AG04449 (cell line): ENCODE measurements at regions of chr5 and their contacts with region 1.

Region 1: DNA sequence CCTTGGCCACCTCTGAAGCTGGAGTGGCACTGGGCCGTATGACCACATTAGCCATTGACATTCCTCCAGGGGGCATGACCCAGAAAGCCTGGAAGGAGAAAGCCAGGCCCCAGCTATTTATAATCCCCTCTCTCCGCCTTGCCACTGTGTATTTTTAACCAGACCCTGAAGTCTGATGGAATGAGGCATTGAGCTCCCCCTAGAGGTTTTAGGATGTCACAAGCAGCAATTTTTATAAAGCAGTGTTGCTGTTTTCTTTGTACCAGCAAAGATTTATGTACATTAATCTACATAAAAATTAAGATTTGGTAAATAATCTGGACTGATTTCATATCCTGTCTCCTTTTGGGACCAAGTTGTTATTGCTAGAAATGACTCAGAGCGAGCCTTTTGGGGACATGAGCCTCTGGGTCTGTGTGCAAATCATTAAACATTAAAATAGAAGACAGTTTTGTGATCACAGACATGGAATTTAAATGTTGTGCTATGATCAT is 127.1 kb downstream of the TRIO start:
- DNase-seq: no peak
- H3K4me3 ChIP-seq: no peak overlapping the region
- CTCF ChIP-seq: peak; percentile 62

Region 2: GRCh38 chr5:13771011-13771571 is 499.2 kb before region 1 on chr5:
- CTCF ChIA-PET with region 1: no interaction called
- POLR2A ChIA-PET with region 1: no interaction called
- DNase-seq: no peak
- H3K4me3 ChIP-seq: no peak overlapping the region
- CTCF ChIP-seq: no peak

Region 3: GRCh38 chr5:13987843-13988464 is 282.3 kb before region 1 on chr5:
- CTCF ChIA-PET with region 1: interaction called, 26 read pairs
- POLR2A ChIA-PET with region 1: no interaction called
- DNase-seq: peak; percentile 21
- H3K4me3 ChIP-seq: no peak overlapping the region
- CTCF ChIP-seq: peak; percentile 74

Region 4: GRCh38 chr5:14108170-14108996 is 161.9 kb before region 1 on chr5:
- CTCF ChIA-PET with region 1: interaction called, 24 read pairs
- POLR2A ChIA-PET with region 1: no interaction called
- DNase-seq: no peak
- H3K4me3 ChIP-seq: no peak overlapping the region
- CTCF ChIP-seq: peak; percentile 45

Region 5: DNA sequence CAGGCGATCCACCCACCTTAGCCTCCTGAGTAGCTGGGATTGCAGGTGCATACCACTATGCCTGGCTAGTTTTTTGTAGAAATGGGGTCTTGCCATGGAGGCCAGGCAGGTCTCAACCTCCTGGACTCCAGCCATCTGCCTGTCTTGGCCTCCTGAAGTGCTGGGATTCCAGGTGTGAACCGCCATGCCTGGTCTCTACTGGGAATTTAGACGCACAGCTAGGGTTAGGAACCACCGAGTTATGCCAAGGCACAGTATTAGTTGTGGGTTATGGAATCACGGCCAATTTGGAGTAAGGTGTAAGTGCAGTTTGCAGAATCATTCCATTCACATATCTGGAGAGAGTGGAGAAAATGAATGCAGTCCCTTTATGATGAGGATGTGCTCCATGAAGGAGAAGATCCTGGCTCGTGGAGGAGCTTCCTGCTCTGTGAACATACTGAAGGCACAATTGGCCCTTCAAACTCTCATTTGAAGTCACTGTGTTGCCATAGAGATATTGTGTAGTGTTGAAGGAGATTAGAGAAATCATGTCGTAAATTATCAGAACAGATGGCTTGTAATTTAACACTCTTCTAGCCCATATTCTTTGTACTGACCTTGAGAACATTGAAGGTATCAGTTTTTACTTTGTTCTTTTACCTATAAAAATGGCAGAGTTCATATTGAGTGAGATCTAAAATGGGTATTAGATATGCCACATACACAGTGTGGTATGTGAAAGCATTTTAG is 108.3 kb before region 1 on chr5:
- CTCF ChIA-PET with region 1: interaction called, 51 read pairs
- POLR2A ChIA-PET with region 1: interaction called, 3 read pairs
- DNase-seq: no peak
- H3K4me3 ChIP-seq: no peak overlapping the region
- CTCF ChIP-seq: no peak

Region 6: GRCh38 chr5:14250084-14250695 is 20.1 kb before region 1 on chr5:
- CTCF ChIA-PET with region 1: interaction called, 13 read pairs
- POLR2A ChIA-PET with region 1: interaction called, 3 read pairs
- DNase-seq: no peak
- H3K4me3 ChIP-seq: no peak overlapping the region
- CTCF ChIP-seq: no peak

Region 7: GRCh38 chr5:14286574-14287421 is 16.5 kb after region 1 on chr5:
- CTCF ChIA-PET with region 1: interaction called, 70 read pairs
- POLR2A ChIA-PET with region 1: interaction called, 3 read pairs
- DNase-seq: no peak
- H3K4me3 ChIP-seq: no peak overlapping the region
- CTCF ChIP-seq: no peak

Region 8: DNA sequence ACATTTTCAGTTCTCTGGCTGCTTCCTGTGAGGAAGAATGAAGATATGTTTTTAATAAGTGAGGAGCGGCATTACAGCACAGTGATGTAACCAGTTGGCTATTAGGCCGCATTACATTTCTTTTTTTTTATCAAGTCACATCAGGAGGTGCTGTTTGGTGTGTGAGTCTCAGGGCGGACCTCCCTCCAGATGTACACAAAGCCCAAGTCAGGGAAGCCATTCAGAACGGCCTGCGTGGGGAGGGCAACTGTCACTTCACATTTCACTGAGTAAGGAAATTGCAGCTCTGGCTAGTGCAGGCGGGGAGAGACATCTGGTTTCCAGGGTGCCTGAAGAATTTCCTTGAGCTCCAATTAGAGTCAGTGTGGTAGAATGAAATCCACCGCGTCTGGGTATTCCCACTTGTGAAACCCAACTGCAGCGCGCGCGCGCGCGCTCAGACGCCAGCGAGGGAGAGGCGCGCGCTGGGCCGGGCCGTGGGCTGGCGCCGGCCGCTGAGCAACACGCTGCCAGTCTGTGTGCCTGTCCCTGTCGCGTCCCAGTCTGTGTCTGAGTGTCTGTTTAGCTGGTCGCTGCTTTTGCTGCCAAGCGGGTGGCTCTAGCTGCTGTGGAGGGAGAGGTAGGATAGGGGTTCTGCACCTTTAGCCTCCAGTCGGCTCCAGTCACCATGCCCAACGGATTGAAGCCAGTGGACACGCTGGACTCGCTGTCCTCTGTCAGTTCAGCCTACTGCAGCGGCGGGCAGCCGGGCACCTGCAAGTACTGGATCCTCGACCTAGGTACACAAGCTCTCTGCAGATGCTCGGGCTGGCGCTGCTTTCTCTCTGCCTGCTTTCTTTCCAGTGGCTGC is 170.6 kb after region 1 on chr5:
- CTCF ChIA-PET with region 1: no interaction called
- POLR2A ChIA-PET with region 1: no interaction called
- DNase-seq: peak; percentile 82
- H3K4me3 ChIP-seq: peak overlapping the region; percentile 68
- CTCF ChIP-seq: no peak